ENCODE measurements at regions of chr6 and their contacts with region 1.

Region 1: DNA sequence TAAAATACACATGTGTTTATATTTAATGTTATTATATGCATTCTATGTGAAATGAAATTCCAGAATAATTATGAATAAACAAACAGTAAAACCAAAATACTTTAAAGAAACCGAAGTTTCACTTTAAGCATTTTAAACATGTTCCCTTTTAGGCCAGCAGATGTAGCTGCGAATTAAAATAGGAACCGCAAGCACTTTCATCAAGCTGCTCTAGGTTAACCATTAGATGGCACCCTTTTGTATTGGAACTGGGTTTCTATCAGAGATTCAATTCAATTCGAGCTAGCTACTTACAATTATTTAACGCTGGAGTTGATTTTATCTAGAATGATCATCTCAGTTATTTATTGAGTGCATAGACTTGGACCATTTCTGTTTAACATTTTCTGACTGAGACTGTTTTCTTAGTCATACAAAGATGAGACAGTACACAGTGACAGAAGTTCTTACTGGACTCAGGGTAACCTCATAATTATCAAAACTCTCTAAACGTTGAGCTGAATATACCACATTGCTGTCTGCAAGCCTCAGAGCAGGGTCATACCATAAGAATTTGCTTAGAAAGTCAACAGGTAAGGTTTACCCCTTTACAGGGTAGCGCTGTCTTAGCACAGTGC is 8.5 kb downstream of the TMEM242 start:
- DNase-seq: peak in 1 of 2 experiments; percentile 41
- H3K4me3 ChIP-seq: no peak overlapping the region
- H3K4me3 Mint-ChIP-seq: no peak overlapping the region
- H3K27ac Mint-ChIP-seq: no peak overlapping the region
- H3K4me1 ChIP-seq: no peaks in the 10 kb centered on the region
- H3K4me1 Mint-ChIP-seq: peaks cover 7% of the 10 kb centered on the region
- H3K27me3 ChIP-seq: no peaks in the 10 kb centered on the region
- H3K27me3 Mint-ChIP-seq: no peaks in the 10 kb centered on the region
- CTCF ChIP-seq: peak; percentile 58 to 85

Region 2: GRCh38 chr6:157203312-157203744 is 111.5 kb before region 1 on chr6:
- CTCF ChIA-PET with region 1: no interaction called
- POLR2A ChIA-PET with region 1: no interaction called
- intact Hi-C with region 1: no loop called
- DNase-seq: no peak
- H3K4me3 ChIP-seq: no peak overlapping the region
- H3K4me3 Mint-ChIP-seq: no peak overlapping the region
- H3K27ac Mint-ChIP-seq: no peak overlapping the region
- H3K4me1 ChIP-seq: no peaks in the 10 kb centered on the region
- H3K4me1 Mint-ChIP-seq: no peaks in the 10 kb centered on the region
- H3K27me3 ChIP-seq: no peaks in the 10 kb centered on the region
- H3K27me3 Mint-ChIP-seq: no peaks in the 10 kb centered on the region
- CTCF ChIP-seq: no peak

Region 3: DNA sequence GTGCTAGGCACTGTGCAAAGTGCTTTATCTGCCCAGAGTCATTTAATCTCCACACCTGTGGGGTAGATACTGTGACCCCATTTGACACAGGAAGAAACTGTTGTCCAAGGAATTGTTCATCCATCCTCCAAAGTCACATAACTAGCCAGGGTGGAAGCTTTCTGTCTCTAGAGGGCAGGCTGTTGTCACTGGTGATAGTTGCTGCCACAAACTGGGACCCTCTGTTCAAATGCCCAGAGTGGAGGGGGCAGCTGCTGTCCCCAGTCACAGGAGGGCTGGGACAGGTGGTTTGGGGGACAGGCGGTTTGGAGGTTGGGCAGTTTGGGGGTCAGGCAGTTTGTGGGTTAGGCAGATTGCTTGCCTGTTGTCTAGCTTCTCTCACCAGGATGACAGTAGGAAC is 24.6 kb after region 1 on chr6:
- CTCF ChIA-PET with region 1: interaction called, 6 read pairs
- POLR2A ChIA-PET with region 1: no interaction called
- intact Hi-C with region 1: loop called (anchors 2 kb)
- DNase-seq: no peak
- H3K4me3 ChIP-seq: no peak overlapping the region
- H3K4me3 Mint-ChIP-seq: no peak overlapping the region
- H3K27ac Mint-ChIP-seq: no peak overlapping the region
- H3K4me1 ChIP-seq: 0 out of 2 replicates have a peak, but pooled peaks cover 4% of the 10 kb centered on the region
- H3K4me1 Mint-ChIP-seq: no peaks in the 10 kb centered on the region
- H3K27me3 ChIP-seq: no peaks in the 10 kb centered on the region
- H3K27me3 Mint-ChIP-seq: no peaks in the 10 kb centered on the region
- CTCF ChIP-seq: peak in 1 of 2 experiments; percentile 30

Region 4: DNA sequence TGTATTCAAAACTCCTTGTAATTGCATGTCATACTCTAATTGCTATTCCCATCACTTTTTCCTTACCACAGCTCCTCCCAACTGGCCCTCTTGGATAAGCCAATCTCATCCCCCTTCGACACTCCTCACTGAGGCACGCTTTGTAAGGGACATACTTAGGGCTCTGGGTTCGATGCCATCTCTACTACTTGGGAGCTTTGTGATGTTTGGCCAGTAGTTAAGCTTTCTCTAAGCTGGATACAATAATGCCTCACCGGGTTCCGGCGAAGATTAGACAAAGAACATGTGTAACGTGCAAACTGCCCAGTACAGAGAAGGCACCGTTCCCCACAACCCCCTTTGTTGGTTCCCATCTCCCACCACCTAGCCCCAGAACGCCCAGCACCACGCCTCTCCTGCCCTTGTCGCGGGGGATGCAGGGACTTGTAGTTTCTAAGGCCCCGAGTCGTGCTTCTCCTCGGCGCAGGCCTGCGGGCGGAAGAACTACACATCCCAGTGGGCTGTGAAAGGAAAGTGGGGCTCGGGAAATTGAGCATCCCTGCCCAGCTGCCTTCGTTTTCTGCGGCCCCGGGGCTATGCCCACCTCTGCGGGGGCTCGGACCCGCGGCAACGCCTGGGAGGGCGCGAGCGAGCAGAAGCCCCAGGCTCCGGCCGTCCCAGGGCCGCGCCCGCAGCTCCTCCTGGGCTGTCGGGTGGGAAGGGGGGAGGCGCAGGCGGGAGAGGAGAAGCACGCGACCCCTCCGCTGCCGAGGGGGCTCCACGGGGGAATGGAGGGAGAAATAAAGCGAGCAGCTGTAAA is 65.0 kb after region 1 on chr6:
- CTCF ChIA-PET with region 1: interaction called, 5 read pairs
- POLR2A ChIA-PET with region 1: no interaction called
- intact Hi-C with region 1: loop called (anchors 2 kb)
- DNase-seq: peak; percentile 88
- H3K4me3 ChIP-seq: peak overlapping the region; percentile 98
- H3K4me3 Mint-ChIP-seq: peak overlapping the region; percentile 83
- H3K27ac Mint-ChIP-seq: no peak overlapping the region
- H3K4me1 ChIP-seq: peaks cover 7% of the 10 kb centered on the region; the same call in 1 of the 2 replicates
- H3K4me1 Mint-ChIP-seq: peaks cover 31% of the 10 kb centered on the region
- H3K27me3 ChIP-seq: no peaks in the 10 kb centered on the region
- H3K27me3 Mint-ChIP-seq: no peaks in the 10 kb centered on the region
- CTCF ChIP-seq: no peak

Region 5: GRCh38 chr6:157614026-157614568 is 299.3 kb after region 1 on chr6:
- CTCF ChIA-PET with region 1: interaction called, 12 read pairs
- POLR2A ChIA-PET with region 1: interaction called, 3 read pairs
- intact Hi-C with region 1: loop called (anchors 1 kb)
- DNase-seq: no peak
- H3K4me3 ChIP-seq: no peak overlapping the region
- H3K4me3 Mint-ChIP-seq: no peak overlapping the region
- H3K27ac Mint-ChIP-seq: peak overlapping the region; percentile 52
- H3K4me1 ChIP-seq: no peaks in the 10 kb centered on the region
- H3K4me1 Mint-ChIP-seq: no peaks in the 10 kb centered on the region
- H3K27me3 ChIP-seq: no peaks in the 10 kb centered on the region
- H3K27me3 Mint-ChIP-seq: no peaks in the 10 kb centered on the region
- CTCF ChIP-seq: no peak

Region 6: GRCh38 chr6:157667211-157668008 is 352.6 kb after region 1 on chr6:
- CTCF ChIA-PET with region 1: interaction called, 5 read pairs
- POLR2A ChIA-PET with region 1: no interaction called
- intact Hi-C with region 1: loop called (anchors 1 kb)
- DNase-seq: peak in 1 of 2 experiments; percentile 59
- H3K4me3 ChIP-seq: no peak overlapping the region
- H3K4me3 Mint-ChIP-seq: no peak overlapping the region
- H3K27ac Mint-ChIP-seq: peak overlapping the region; percentile 2
- H3K4me1 ChIP-seq: no peaks in the 10 kb centered on the region
- H3K4me1 Mint-ChIP-seq: peaks cover 7% of the 10 kb centered on the region
- H3K27me3 ChIP-seq: no peaks in the 10 kb centered on the region
- H3K27me3 Mint-ChIP-seq: no peaks in the 10 kb centered on the region
- CTCF ChIP-seq: peak; percentile 86 to 89

Region 7: GRCh38 chr6:157688960-157689599 is 374.3 kb after region 1 on chr6:
- CTCF ChIA-PET with region 1: no interaction called
- POLR2A ChIA-PET with region 1: no interaction called
- intact Hi-C with region 1: loop called (anchors 1 kb)
- DNase-seq: peak in 1 of 2 experiments; percentile 34
- H3K4me3 ChIP-seq: no peak overlapping the region
- H3K4me3 Mint-ChIP-seq: no peak overlapping the region
- H3K27ac Mint-ChIP-seq: no peak overlapping the region
- H3K4me1 ChIP-seq: 0 out of 2 replicates have a peak, but pooled peaks cover 5% of the 10 kb centered on the region
- H3K4me1 Mint-ChIP-seq: peaks cover 7% of the 10 kb centered on the region
- H3K27me3 ChIP-seq: no peaks in the 10 kb centered on the region
- H3K27me3 Mint-ChIP-seq: no peaks in the 10 kb centered on the region
- CTCF ChIP-seq: peak in 1 of 2 experiments; percentile 23

Region 8: GRCh38 chr6:157756708-157757429 is 442.1 kb after region 1 on chr6:
- CTCF ChIA-PET with region 1: no interaction called
- POLR2A ChIA-PET with region 1: no interaction called
- intact Hi-C with region 1: no loop called
- DNase-seq: peak; percentile 69 to 75
- H3K4me3 ChIP-seq: no peak overlapping the region
- H3K4me3 Mint-ChIP-seq: no peak overlapping the region
- H3K27ac Mint-ChIP-seq: no peak overlapping the region
- H3K4me1 ChIP-seq: peaks cover 21% of the 10 kb centered on the region
- H3K4me1 Mint-ChIP-seq: peaks cover 48% of the 10 kb centered on the region
- H3K27me3 ChIP-seq: no peaks in the 10 kb centered on the region
- H3K27me3 Mint-ChIP-seq: no peaks in the 10 kb centered on the region
- CTCF ChIP-seq: peak; percentile 73 to 75

Region 9: DNA sequence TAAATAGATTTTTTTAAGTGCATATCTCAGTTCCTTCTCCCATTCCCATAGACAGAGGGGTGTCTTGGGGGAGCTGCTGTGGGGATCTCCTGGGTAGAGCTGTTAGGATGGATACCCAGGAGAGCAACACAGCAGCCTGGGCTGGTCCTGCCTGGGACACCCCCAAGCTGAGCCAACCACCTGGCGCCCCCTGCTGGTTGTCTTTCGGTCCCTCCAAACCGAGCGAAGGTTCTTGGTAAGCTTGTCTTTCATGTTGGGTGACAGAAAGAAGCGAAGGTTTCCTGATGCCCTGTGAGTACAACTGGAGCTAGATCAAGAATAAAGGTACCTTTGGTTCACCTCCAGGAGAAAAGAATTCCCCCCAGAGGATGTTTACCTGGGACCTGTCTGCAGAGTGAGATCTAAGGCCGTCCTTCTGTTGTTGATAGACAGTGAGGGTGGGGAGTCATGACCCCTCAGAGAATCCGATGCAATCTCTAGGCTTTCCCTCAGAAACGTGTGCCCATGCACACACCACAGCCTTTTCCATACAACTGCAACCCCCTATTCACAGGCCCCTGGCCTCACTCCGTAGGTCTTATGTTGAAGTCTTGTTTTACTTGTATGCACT is 559.0 kb after region 1 on chr6:
- CTCF ChIA-PET with region 1: interaction called, 10 read pairs
- POLR2A ChIA-PET with region 1: no interaction called
- intact Hi-C with region 1: no loop called
- DNase-seq: peak; percentile 71 to 83
- H3K4me3 ChIP-seq: no peak overlapping the region
- H3K4me3 Mint-ChIP-seq: no peak overlapping the region
- H3K27ac Mint-ChIP-seq: no peak overlapping the region
- H3K4me1 ChIP-seq: no peaks in the 10 kb centered on the region
- H3K4me1 Mint-ChIP-seq: no peaks in the 10 kb centered on the region
- H3K27me3 ChIP-seq: no peaks in the 10 kb centered on the region
- H3K27me3 Mint-ChIP-seq: no peaks in the 10 kb centered on the region
- CTCF ChIP-seq: peak; percentile 79 to 85